AG04449 (cell line): ENCODE measurements at regions of chr17 and their contacts with region 1.

Region 1: GRCh38 chr17:67491009-67491680 is 114.1 kb downstream of the PITPNC1 start:
- DNase-seq: peak; percentile 89
- H3K4me3 ChIP-seq: peak overlapping the region; percentile 36
- CTCF ChIP-seq: no peak

Region 2: GRCh38 chr17:67629971-67630320 is 138.8 kb after region 1 on chr17:
- CTCF ChIA-PET with region 1: interaction called, 12 read pairs
- POLR2A ChIA-PET with region 1: no interaction called
- DNase-seq: peak; percentile 26
- H3K4me3 ChIP-seq: no peak overlapping the region
- CTCF ChIP-seq: peak; percentile 59